Activated CD4-positive, alpha-beta T cell treated with anti-CD3 and anti-CD28 coated beads for 36 hours (primary cell): ENCODE measurements at regions of chr11 and their contacts with region 1.

Region 1: DNA sequence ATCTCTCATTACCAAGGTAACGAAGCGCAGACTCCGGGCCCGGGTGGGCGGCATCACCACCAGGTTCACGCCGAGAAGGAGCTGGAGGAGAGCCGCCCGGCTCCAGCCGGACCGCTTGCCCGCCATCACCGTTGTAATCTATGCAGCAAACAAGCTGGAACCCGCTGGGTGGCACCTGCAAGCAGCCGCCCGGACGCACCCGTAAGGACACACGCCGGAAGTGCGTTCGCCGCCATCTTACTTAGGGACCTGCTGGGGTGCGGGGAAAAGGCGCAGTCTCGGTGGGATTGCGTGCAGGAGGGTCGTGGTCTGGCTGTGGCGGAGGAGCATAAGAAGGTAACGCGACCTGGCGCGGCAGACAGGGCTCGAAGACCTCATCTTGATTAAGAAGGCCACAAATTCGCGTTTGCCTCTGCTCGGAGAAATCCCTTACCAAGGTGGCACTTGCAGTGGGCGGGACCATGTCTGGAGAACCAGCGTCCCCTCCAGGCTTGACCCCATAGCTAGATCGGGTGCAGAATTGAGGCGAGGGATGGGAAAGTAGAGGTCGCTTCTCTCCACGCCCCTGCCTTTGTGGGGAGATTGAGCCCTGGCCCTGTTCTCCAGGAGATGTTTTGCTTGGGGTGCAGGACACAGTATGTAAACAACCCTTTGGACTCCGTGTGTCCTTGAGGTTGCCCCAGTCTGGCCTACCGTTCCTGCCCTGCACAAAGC is at the start of gene ACP2:
- DNase-seq: peak; percentile 94
- ATAC-seq: peak; percentile 97
- H3K4me3 Mint-ChIP-seq: peak within 1 kb of the TSS; percentile 78
- H3K27ac Mint-ChIP-seq: peak within 1 kb of the TSS; percentile 95
- H3K4me1 Mint-ChIP-seq: peaks cover 22% of the 10 kb centered on the region
- H3K27me3 Mint-ChIP-seq: no peaks in the 10 kb centered on the region
- total RNA-seq, gene ACP2: 10.2 to 11.2 TPM

Region 2: GRCh38 chr11:46936138-46937110 is 312.4 kb before region 1 on chr11 and contains the start of gene CSTPP1:
- CTCF ChIA-PET with region 1: interaction called, 3 read pairs
- POLR2A ChIA-PET with region 1: interaction called, 6 read pairs
- intact Hi-C with region 1: loop called (anchors 1 to 2 kb)
- DNase-seq: peak; percentile 97
- ATAC-seq: peak; percentile 96
- H3K4me3 Mint-ChIP-seq: peak within 1 kb of the TSS; percentile 86
- H3K27ac Mint-ChIP-seq: peak within 1 kb of the TSS; percentile 88
- H3K4me1 Mint-ChIP-seq: peaks cover 16% of the 10 kb centered on the region
- H3K27me3 Mint-ChIP-seq: peaks cover 5% of the 10 kb centered on the region
- total RNA-seq, gene CSTPP1: 17.9 to 18.6 TPM

Region 3: DNA sequence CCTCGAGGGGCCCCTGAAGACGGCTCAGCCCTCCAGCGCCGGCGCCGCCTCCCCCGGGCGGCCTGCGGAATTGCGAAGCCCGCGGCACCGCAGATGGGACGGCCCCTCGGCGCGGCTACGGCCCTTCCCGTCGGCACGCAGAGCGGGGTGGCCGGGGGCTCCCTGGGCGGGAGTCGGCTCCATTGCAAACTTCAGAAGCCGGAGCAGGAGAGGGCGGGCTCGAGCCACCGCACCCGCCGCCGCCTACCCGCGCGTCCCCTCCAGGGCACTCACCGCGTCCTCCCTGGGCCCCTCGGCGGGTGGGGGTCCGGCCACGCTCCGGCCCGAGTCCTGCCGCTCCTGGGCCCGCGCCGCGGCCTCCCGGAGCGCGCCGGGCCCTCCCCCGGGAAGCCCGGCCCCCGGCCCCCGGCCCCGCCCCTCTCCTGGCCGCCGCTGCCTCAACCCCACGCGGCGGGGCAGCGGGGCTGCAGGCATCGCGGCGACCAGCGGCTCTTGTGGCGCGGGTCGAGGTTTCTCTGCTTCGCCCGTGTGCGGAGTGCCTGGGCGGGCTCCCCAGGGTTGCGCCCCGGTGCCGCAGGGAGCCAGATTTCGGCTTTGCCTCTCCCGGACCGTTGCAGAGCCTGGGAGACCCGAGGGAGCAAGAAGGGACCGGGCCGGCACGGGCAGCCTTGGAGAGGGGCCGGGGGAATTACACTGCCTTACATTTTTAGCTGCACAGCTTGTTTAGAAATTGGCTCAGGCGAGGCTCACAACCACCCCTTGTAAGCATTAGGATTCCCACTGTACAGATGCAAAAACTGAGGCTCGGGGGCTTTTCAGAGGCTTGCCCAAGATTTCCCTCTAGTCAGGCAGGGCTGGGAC is 62.5 kb before region 1 on chr11 and contains the start of gene PACSIN3:
- CTCF ChIA-PET with region 1: no interaction called
- POLR2A ChIA-PET with region 1: no interaction called
- intact Hi-C with region 1: loop called in 1 of 2 experiments (anchors 2 kb)
- DNase-seq: peak; percentile 61
- ATAC-seq: peak; percentile 64
- H3K4me3 Mint-ChIP-seq: peak within 1 kb of the TSS; percentile 63
- H3K27ac Mint-ChIP-seq: no peak within 1 kb of the TSS
- H3K4me1 Mint-ChIP-seq: peaks cover 7% of the 10 kb centered on the region
- H3K27me3 Mint-ChIP-seq: peaks cover 19% of the 10 kb centered on the region
- total RNA-seq, gene PACSIN3: 4.1 to 5.9 TPM

Region 4: GRCh38 chr11:47233989-47234668 is 14.7 kb before region 1 on chr11:
- CTCF ChIA-PET with region 1: interaction called, 7 read pairs
- POLR2A ChIA-PET with region 1: interaction called, 15 read pairs
- intact Hi-C with region 1: no loop called
- DNase-seq: peak; percentile 25
- ATAC-seq: peak; percentile 31
- H3K4me3 Mint-ChIP-seq: no peak overlapping the region
- H3K27ac Mint-ChIP-seq: peak overlapping the region; percentile 81
- H3K4me1 Mint-ChIP-seq: peaks cover 28% of the 10 kb centered on the region
- H3K27me3 Mint-ChIP-seq: no peaks in the 10 kb centered on the region

Region 5: DNA sequence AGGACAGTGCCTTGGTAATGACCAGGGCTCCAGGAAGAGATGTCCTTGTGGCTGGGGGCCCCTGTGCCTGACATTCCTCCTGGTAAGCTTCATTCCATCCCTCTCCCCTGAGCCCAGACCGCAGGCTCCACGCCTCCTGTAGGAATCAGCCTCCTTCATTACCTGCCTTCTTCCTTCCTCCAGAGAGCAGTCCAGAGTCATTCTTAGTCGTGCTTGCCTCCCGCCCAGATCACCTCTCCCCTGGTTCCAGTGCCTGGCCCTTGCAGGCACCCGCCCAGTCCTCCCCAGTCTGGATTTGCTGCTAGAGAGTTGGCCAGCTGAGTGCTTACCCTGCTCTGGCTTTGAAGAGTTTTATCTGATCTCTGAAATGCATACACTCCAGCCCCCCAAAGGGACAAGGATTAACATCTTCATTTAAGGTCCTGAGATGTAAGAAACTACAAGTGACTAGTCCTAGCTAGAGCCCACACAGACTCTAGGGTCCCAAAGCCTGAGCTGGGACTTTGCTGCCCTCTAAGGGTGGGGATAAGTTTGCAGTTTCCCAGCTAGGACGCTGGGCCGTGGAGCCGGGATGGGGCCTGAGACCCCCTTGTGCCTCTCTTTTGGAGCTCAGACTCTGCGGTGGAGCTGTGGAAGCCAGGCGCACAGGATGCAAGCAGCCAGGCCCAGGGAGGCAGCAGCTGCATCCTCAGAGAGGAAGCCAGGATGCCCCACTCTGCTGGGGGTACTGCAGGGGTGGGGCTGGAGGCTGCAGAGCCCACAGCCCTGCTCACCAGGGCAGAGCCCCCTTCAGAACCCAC is 10.6 kb after region 1 on chr11:
- CTCF ChIA-PET with region 1: interaction called, 13 read pairs
- POLR2A ChIA-PET with region 1: interaction called, 6 read pairs
- intact Hi-C with region 1: no loop called
- DNase-seq: peak; percentile 58
- ATAC-seq: peak; percentile 86
- H3K4me3 Mint-ChIP-seq: no peak overlapping the region
- H3K27ac Mint-ChIP-seq: no peak overlapping the region
- H3K4me1 Mint-ChIP-seq: peaks cover 3% of the 10 kb centered on the region
- H3K27me3 Mint-ChIP-seq: no peaks in the 10 kb centered on the region

Region 6: GRCh38 chr11:47269002-47269828 is 20.4 kb after region 1 on chr11:
- CTCF ChIA-PET with region 1: interaction called, 11 read pairs
- POLR2A ChIA-PET with region 1: interaction called, 5 read pairs
- intact Hi-C with region 1: loop called (anchors 1 kb)
- DNase-seq: peak; percentile 93
- ATAC-seq: peak; percentile 61
- H3K4me3 Mint-ChIP-seq: peak overlapping the region; percentile 76
- H3K27ac Mint-ChIP-seq: peak overlapping the region; percentile 98
- H3K4me1 Mint-ChIP-seq: peaks cover 60% of the 10 kb centered on the region
- H3K27me3 Mint-ChIP-seq: no peaks in the 10 kb centered on the region